CD4-positive, alpha-beta T cell (primary cell): ENCODE measurements at regions of chr10 and their contacts with region 1.

Region 1: DNA sequence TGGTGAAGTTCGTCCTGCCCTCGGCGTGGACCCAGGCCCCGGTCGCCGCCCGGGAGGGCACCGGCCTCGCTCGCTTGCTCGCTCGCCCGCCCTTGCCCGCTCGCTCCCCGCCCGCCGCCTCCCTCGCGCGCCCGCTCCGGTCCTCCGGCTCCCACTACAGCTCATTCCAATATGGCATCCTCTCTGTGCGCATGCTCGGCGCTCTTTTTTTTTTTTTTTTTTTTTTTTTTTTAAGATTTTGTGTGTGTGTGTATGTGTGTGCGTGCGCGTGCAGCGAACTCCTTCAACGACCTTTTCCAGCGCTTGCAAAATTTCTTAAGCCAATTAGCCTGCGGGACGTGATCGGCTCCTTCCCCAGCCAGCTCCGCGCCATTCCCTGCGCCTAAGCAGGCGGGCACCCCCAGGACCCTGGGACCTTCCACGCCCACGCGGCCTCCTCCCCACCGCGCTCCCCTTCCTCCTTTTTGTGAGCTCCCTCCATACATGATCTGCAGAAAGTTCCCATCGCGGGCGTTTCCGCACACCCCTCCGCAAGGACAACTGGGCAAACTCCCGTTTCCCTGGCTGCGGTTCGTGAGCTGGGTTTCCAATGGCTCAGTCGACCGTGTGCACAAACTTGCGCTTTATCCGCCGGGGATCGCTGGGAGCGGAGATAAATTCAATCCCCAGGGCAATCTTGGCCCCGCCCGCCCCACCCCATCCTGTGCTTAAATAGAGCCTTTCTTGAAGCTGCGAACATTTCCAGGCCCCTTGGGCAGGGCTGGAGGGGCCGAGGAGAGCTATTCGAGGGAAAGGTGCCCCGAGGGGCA is at the start of gene SFMBT2:
- DNase-seq: peak; percentile 28 to 87 (median 62)
- ATAC-seq: peak; percentile 37
- H3K4me3 ChIP-seq: peak within 1 kb of the TSS; percentile 84
- H3K4me3 Mint-ChIP-seq: peak within 1 kb of the TSS; percentile 97
- H3K27ac ChIP-seq: peak within 1 kb of the TSS in 1 of 2 donors; percentile 61
- H3K27ac Mint-ChIP-seq: peak within 1 kb of the TSS; percentile 94
- H3K4me1 ChIP-seq: peaks cover 44% of the 10 kb centered on the region
- H3K4me1 Mint-ChIP-seq: peaks cover 51% of the 10 kb centered on the region
- H3K27me3 ChIP-seq: peaks cover 0 to 7% of the 10 kb centered on the region in 2 experiments
- H3K27me3 Mint-ChIP-seq: peaks cover 5% of the 10 kb centered on the region
- CTCF ChIP-seq: no peak
- total RNA-seq, gene SFMBT2: 41.0 to 42.0 TPM

Region 2: GRCh38 chr10:6920072-6921019 is 490.7 kb before region 1 on chr10:
- CTCF ChIA-PET with region 1: interaction called, 10 read pairs
- POLR2A ChIA-PET with region 1: interaction called, 6 read pairs
- intact Hi-C with region 1: loop called in 1 of 2 experiments (anchors 1 kb)
- DNase-seq: peak; percentile 61 to 87 (median 68)
- ATAC-seq: peak; percentile 100
- H3K4me3 ChIP-seq: no peak overlapping the region
- H3K4me3 Mint-ChIP-seq: no peak overlapping the region
- H3K27ac ChIP-seq: no peak overlapping the region
- H3K27ac Mint-ChIP-seq: no peak overlapping the region
- H3K4me1 ChIP-seq: peaks cover 8% of the 10 kb centered on the region
- H3K4me1 Mint-ChIP-seq: peaks cover 9% of the 10 kb centered on the region
- H3K27me3 ChIP-seq: no peaks in the 10 kb centered on the region
- H3K27me3 Mint-ChIP-seq: peaks cover 6% of the 10 kb centered on the region
- CTCF ChIP-seq: peak; percentile 70

Region 3: DNA sequence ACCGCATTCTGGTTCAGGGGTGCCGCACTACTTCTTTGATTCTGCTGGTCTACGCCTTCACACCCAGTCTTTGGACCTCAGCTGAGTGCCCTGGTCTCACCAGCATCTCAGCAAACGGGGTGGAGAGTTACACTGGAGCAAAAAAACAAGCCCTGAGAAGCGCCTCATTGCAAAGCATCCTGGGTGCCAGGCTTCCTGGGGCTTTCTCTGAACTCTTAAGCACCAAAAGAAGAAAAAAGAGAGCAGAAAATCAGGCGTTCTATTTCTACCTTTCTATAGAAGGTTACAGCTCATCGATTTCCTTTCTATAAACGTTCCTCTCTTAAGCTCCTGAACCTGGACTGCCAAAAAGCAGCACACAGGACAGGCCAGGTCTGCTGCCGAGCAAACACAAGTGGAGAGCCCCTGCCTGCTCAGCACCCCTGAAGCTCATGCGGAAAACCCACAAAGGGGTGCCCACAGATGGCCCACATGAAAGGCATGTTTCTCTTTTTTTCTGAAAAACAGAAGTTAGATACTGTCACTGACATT is 218.2 kb before region 1 on chr10:
- CTCF ChIA-PET with region 1: no interaction called
- POLR2A ChIA-PET with region 1: interaction called, 3 read pairs
- intact Hi-C with region 1: loop called in 1 of 2 experiments (anchors 2 kb)
- DNase-seq: peak; percentile 41 to 84 (median 60)
- ATAC-seq: peak; percentile 86
- H3K4me3 ChIP-seq: peak overlapping the region; percentile 40
- H3K4me3 Mint-ChIP-seq: peak overlapping the region; percentile 84
- H3K27ac ChIP-seq: peak overlapping the region; percentile 65 to 66
- H3K27ac Mint-ChIP-seq: peak overlapping the region; percentile 95
- H3K4me1 ChIP-seq: peaks cover 56% of the 10 kb centered on the region
- H3K4me1 Mint-ChIP-seq: peaks cover 74% of the 10 kb centered on the region
- H3K27me3 ChIP-seq: no peaks in the 10 kb centered on the region
- H3K27me3 Mint-ChIP-seq: no peaks in the 10 kb centered on the region
- CTCF ChIP-seq: no peak

Region 4: GRCh38 chr10:7354354-7355026 is 56.6 kb before region 1 on chr10:
- CTCF ChIA-PET with region 1: no interaction called
- POLR2A ChIA-PET with region 1: no interaction called
- intact Hi-C with region 1: no loop called
- DNase-seq: no peak
- ATAC-seq: no peak
- H3K4me3 ChIP-seq: no peak overlapping the region
- H3K4me3 Mint-ChIP-seq: no peak overlapping the region
- H3K27ac ChIP-seq: no peak overlapping the region
- H3K27ac Mint-ChIP-seq: no peak overlapping the region
- H3K4me1 ChIP-seq: peaks cover 5% of the 10 kb centered on the region
- H3K4me1 Mint-ChIP-seq: peaks cover 31% of the 10 kb centered on the region
- H3K27me3 ChIP-seq: no peaks in the 10 kb centered on the region
- H3K27me3 Mint-ChIP-seq: no peaks in the 10 kb centered on the region
- CTCF ChIP-seq: no peak

Region 5: DNA sequence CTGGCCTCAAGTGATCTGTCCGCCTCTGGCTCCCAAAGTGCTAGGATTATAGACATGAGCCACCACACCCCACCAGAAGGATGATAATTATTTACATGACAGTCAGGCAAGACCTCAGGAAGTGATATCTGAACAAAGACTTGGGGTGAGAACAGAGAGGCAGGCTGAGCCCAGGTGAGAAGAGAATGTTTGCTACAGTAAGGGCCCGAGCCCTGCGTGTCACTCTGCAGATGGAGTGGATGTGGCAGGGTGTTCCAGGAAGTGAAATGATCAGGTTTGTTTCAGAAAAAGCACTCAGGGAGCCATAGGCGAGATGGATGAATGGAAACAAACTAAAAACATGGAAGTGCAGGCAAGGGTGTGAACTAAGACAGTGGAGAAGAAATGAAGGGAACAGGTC is 22.5 kb before region 1 on chr10:
- CTCF ChIA-PET with region 1: no interaction called
- POLR2A ChIA-PET with region 1: interaction called, 8 read pairs
- intact Hi-C with region 1: loop called in 1 of 2 experiments (anchors 2 kb)
- DNase-seq: peak in 8 of 14 experiments; percentile 18 to 65 (median 38)
- ATAC-seq: peak; percentile 82
- H3K4me3 ChIP-seq: no peak overlapping the region
- H3K4me3 Mint-ChIP-seq: peak overlapping the region; percentile 82
- H3K27ac ChIP-seq: peak overlapping the region in 1 of 2 donors; percentile 55
- H3K27ac Mint-ChIP-seq: peak overlapping the region; percentile 89
- H3K4me1 ChIP-seq: peaks cover 30% of the 10 kb centered on the region
- H3K4me1 Mint-ChIP-seq: peaks cover 79% of the 10 kb centered on the region
- H3K27me3 ChIP-seq: no peaks in the 10 kb centered on the region
- H3K27me3 Mint-ChIP-seq: no peaks in the 10 kb centered on the region
- CTCF ChIP-seq: no peak

Region 6: DNA sequence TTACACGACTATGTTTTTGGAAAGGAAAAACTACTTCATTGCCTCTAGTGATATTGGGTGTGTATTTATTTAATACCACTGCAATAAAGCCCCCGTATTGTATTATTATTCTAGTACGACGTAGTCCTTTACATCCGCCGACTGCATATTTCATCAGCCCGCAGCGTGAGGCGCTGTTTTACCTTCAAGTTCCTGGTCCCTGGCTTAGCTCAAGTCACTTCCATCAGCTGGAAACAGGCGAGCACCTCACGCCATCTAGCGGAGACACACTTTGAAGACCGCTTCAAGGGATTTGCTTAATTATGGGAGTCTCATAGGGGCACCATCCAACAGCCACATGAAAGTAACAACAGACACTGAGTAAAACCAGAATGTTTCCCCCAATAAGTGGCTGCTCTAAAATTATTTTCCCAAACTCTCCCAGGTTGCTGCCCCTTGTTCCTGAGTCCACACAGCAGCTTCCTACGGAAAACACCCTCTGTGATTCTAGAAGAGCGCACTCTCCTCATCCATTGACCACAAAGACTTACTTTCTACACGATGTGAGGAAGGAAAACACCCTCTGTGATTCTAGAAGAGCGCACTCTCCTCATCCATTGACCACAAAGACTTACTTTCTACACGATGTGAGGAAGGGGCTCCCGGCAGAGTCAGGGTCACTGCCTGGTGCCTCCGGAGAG is 276.3 kb after region 1 on chr10:
- CTCF ChIA-PET with region 1: no interaction called
- POLR2A ChIA-PET with region 1: interaction called, 3 read pairs
- intact Hi-C with region 1: loop called in 1 of 2 experiments (anchors 10 kb)
- DNase-seq: peak; percentile 57 to 90 (median 66)
- ATAC-seq: peak; percentile 99
- H3K4me3 ChIP-seq: no peak overlapping the region
- H3K4me3 Mint-ChIP-seq: no peak overlapping the region
- H3K27ac ChIP-seq: no peak overlapping the region
- H3K27ac Mint-ChIP-seq: no peak overlapping the region
- H3K4me1 ChIP-seq: no peaks in the 10 kb centered on the region
- H3K4me1 Mint-ChIP-seq: peaks cover 5% of the 10 kb centered on the region
- H3K27me3 ChIP-seq: no peaks in the 10 kb centered on the region
- H3K27me3 Mint-ChIP-seq: peaks cover 7% of the 10 kb centered on the region
- CTCF ChIP-seq: peak; percentile 89